Breast epithelium (tissue), 4 donors: ENCODE measurements at regions of chr9 and their contacts with region 1.

Region 1: GRCh38 chr9:33167046-33167808 is at the start of gene B4GALT1:
- DNase-seq: peak; percentile 91 to 93
- H3K4me3 ChIP-seq: peak within 1 kb of the TSS; percentile 89 to 91 (median 90)
- H3K27ac ChIP-seq: peak within 1 kb of the TSS; percentile 98 to 99
- H3K4me1 ChIP-seq: peaks cover 8 to 24% of the 10 kb centered on the region in 2 donors
- H3K27me3 ChIP-seq: no peaks in the 10 kb centered on the region
- CTCF ChIP-seq: no peak
- POLR2A ChIP-seq: peak; percentile 47
- total RNA-seq, gene B4GALT1: 60.8 to 81.8 (median 66.2) TPM

Region 2: GRCh38 chr9:32395490-32396216 is 771.6 kb before region 1 on chr9:
- intact Hi-C with region 1: no loop called
- DNase-seq: no peak
- H3K4me3 ChIP-seq: no peak overlapping the region
- H3K27ac ChIP-seq: peak overlapping the region in 1 of 2 donors; percentile 62
- H3K4me1 ChIP-seq: no peaks in the 10 kb centered on the region
- H3K27me3 ChIP-seq: no peaks in the 10 kb centered on the region
- CTCF ChIP-seq: no peak
- POLR2A ChIP-seq: no peak

Region 3: GRCh38 chr9:33081128-33081851 is 85.9 kb before region 1 on chr9:
- intact Hi-C with region 1: loop called (anchors 5 kb)
- DNase-seq: peak in 1 of 2 donors; percentile 50
- H3K4me3 ChIP-seq: peak overlapping the region in 1 of 3 donors; percentile 10
- H3K27ac ChIP-seq: peak overlapping the region; percentile 13 to 68
- H3K4me1 ChIP-seq: peaks cover 0 to 6% of the 10 kb centered on the region in 2 donors
- H3K27me3 ChIP-seq: no peaks in the 10 kb centered on the region
- CTCF ChIP-seq: peak; percentile 83 to 95 (median 86)
- POLR2A ChIP-seq: no peak

Region 4: DNA sequence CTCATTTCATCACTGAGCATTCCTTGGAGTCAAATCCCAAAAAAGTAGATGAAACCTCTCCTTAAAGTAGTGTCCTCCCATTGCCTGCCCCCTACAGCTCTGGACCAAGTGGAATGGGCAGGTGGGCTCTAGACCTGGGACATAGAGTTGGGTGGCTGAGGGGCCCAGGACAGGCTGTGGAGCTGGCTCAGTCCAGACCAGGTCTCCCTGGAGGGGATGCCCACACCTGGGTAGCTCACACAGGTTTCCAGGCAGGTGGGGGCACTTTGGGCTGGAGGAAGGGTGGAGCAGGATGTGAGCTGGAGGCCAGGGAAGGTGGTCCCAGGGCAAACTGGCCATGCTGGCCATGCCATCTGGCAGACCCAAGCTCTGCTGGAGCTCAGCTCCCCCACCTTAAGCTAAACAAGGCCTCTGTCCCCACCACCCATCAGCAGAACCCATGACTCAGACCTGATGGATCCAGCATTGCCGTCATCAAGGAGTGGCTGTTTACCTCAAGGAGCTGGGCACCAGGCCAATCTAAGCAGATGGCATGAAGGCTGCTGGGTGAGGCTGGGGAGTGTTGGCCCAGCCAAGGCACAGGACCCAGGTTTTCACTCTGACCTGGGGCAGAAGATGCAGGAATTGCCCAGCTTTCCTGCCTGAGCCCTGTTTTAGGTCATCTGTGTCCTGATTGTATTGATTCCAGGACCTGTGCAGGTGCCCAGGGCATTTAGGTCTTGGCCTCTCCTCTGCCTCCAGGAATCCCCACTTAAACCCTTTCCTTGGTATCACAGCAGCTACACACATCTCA is 66.7 kb after region 1 on chr9:
- intact Hi-C with region 1: loop called (anchors 5 kb)
- DNase-seq: peak; percentile 86 to 90
- H3K4me3 ChIP-seq: no peak overlapping the region
- H3K27ac ChIP-seq: peak overlapping the region; percentile 79 to 82
- H3K4me1 ChIP-seq: no peaks in the 10 kb centered on the region
- H3K27me3 ChIP-seq: no peaks in the 10 kb centered on the region
- CTCF ChIP-seq: no peak
- POLR2A ChIP-seq: no peak